PC-3 (cell line): ENCODE measurements at regions of chr5 and their contacts with region 1.

Region 1: GRCh38 chr5:52964138-52964537 is 25.0 kb upstream of the ITGA2 start:
- DNase-seq: peak; percentile 33
- ATAC-seq: peak; percentile 95
- H3K4me3 ChIP-seq: no peak overlapping the region
- H3K27ac ChIP-seq: no peak overlapping the region
- H3K4me1 ChIP-seq: no peaks in the 10 kb centered on the region
- H3K27me3 ChIP-seq: no peaks in the 10 kb centered on the region
- CTCF ChIP-seq: peak; percentile 42; the same call in 1 of the 2 replicates

Region 2: GRCh38 chr5:52983731-52984636 is 19.8 kb after region 1 on chr5:
- CTCF ChIA-PET with region 1: interaction called, 4 read pairs
- POLR2A ChIA-PET with region 1: interaction called, 25 read pairs
- intact Hi-C with region 1: no loop called
- DNase-seq: peak; percentile 52
- ATAC-seq: peak; percentile 10; the same call in 1 of the 2 replicates
- H3K4me3 ChIP-seq: no peak overlapping the region
- H3K27ac ChIP-seq: peak overlapping the region; percentile 92
- H3K4me1 ChIP-seq: peaks cover 47% of the 10 kb centered on the region
- H3K27me3 ChIP-seq: no peaks in the 10 kb centered on the region
- CTCF ChIP-seq: no peak